CD14-positive monocyte (primary cell): ENCODE measurements at regions of chr10 and their contacts with region 1.

Region 1: GRCh38 chr10:118046395-118047156 is at the start of gene RAB11FIP2:
- DNase-seq: peak; percentile 90 to 92 (median 90)
- H3K4me3 ChIP-seq: peak within 1 kb of the TSS; percentile 69 to 87 (median 81)
- H3K4me3 Mint-ChIP-seq: peak within 1 kb of the TSS; percentile 85 to 94
- H3K27ac ChIP-seq: peak within 1 kb of the TSS; percentile 50 to 84
- H3K27ac Mint-ChIP-seq: peak within 1 kb of the TSS; percentile 60 to 89 (median 82)
- H3K4me1 ChIP-seq: peaks cover 16 to 20% of the 10 kb centered on the region in 2 donors
- H3K4me1 Mint-ChIP-seq: peaks cover 32% of the 10 kb centered on the region
- H3K27me3 ChIP-seq: no peaks in the 10 kb centered on the region
- H3K27me3 Mint-ChIP-seq: no peaks in the 10 kb centered on the region
- CTCF ChIP-seq: no peak
- polyA plus RNA-seq, gene RAB11FIP2: 3.5 to 6.7 (median 5.4) TPM

Region 2: GRCh38 chr10:117375360-117376178 is 671.0 kb before region 1 on chr10 and contains the start of gene PDZD8:
- intact Hi-C with region 1: loop called in 1 of 2 experiments (anchors 10 kb)
- DNase-seq: peak; percentile 90 to 94 (median 92)
- H3K4me3 ChIP-seq: peak within 1 kb of the TSS; percentile 85 to 93 (median 92)
- H3K4me3 Mint-ChIP-seq: peak within 1 kb of the TSS; percentile 97
- H3K27ac ChIP-seq: peak within 1 kb of the TSS; percentile 68 to 88
- H3K27ac Mint-ChIP-seq: peak within 1 kb of the TSS; percentile 85 to 93 (median 90)
- H3K4me1 ChIP-seq: peaks cover 33 to 52% of the 10 kb centered on the region in 2 donors
- H3K4me1 Mint-ChIP-seq: peaks cover 39% of the 10 kb centered on the region
- H3K27me3 ChIP-seq: no peaks in the 10 kb centered on the region
- H3K27me3 Mint-ChIP-seq: peaks cover 5 to 10% (median 8%) of the 10 kb centered on the region in 3 donors
- CTCF ChIP-seq: no peak
- polyA plus RNA-seq, gene PDZD8: 4.6 to 104 (median 9.0) TPM

Region 3: DNA sequence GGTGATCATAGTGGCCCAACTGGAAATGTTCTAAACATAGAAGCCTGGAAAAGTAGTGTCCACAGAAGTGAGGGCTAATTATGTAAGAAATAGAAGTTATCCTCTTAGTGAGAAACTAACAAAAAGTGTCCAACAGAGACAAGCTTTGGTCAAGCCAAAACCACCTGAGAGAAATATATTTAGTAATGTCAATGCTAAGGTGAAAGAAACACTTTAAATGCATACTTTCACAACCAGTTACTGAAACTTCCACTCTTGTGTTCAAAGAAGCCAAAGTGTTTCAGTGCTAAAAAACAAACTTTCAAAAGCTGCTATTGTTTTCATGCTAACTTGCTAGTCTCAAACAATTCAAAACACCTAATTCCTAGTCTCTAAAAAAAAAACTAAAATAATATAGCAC is 18.0 kb before region 1 on chr10:
- intact Hi-C with region 1: loop called in 1 of 2 experiments (anchors 2 kb)
- DNase-seq: no peak
- H3K4me3 ChIP-seq: no peak overlapping the region
- H3K4me3 Mint-ChIP-seq: no peak overlapping the region
- H3K27ac ChIP-seq: no peak overlapping the region
- H3K27ac Mint-ChIP-seq: no peak overlapping the region
- H3K4me1 ChIP-seq: no peaks in the 10 kb centered on the region
- H3K4me1 Mint-ChIP-seq: no peaks in the 10 kb centered on the region
- H3K27me3 ChIP-seq: no peaks in the 10 kb centered on the region
- H3K27me3 Mint-ChIP-seq: no peaks in the 10 kb centered on the region
- CTCF ChIP-seq: no peak

Region 4: GRCh38 chr10:118341791-118342637 is 295.4 kb after region 1 on chr10 and contains the start of gene FAM204A:
- intact Hi-C with region 1: loop called in 1 of 2 experiments (anchors 10 kb)
- DNase-seq: peak; percentile 90 to 97 (median 95)
- H3K4me3 ChIP-seq: peak within 1 kb of the TSS; percentile 84 to 98 (median 97)
- H3K4me3 Mint-ChIP-seq: peak within 1 kb of the TSS; percentile 85 to 93
- H3K27ac ChIP-seq: peak within 1 kb of the TSS; percentile 6 to 91
- H3K27ac Mint-ChIP-seq: peak within 1 kb of the TSS; percentile 77 to 94 (median 90)
- H3K4me1 ChIP-seq: peaks cover 21 to 28% of the 10 kb centered on the region in 2 donors
- H3K4me1 Mint-ChIP-seq: peaks cover 33% of the 10 kb centered on the region
- H3K27me3 ChIP-seq: no peaks in the 10 kb centered on the region
- H3K27me3 Mint-ChIP-seq: peaks cover 5 to 8% (median 6%) of the 10 kb centered on the region in 3 donors
- CTCF ChIP-seq: no peak
- polyA plus RNA-seq, gene FAM204A: 24.6 to 191 (median 139) TPM